ENCODE measurements at regions of chr18 and their contacts with region 1.

Region 1: DNA sequence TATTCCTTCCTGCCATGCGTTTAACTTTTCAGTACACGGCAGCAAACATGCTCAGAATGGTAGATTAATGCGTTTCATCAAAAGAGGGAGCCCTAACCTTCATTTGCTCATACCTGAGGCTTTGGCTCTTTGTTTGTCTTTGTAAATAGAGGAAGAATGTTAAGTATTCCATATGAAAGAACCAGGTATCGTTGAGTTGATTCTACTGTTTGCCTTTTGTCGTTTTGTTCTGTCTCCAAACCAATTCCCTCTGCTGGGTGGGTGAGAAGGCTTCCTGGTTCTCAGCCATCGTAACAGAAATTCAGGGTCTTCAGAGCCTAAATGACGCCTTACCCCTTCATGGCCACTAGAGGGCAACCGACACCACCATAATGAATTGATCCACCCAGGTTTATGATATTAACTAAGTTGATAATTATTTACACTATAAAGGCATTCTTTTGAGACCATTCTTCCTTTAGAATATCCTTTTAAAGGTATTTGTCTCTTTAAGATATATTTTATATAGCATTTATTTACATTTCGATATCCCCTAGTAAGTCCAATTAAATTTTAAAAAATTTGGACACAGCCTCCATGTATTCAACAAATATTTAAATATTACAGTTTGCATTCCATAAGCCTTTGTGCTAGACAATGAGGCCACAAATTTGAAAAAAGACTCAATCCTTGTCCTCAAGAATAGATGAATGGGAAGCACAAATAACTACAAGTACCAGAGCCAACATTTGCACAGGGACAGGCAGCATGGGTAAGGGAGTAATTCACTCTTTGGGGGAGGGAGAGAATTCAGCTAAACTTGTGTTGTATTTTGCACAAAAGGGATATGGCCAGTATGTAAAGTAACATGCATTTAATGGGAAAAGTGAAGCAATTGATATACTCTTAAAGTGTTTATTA is 48.1 kb downstream of the TIMM21 start:
- DNase-seq: no peak

Region 2: GRCh38 chr18:73891572-73892421 is 304.7 kb before region 1 on chr18:
- intact Hi-C with region 1: no loop called
- DNase-seq: no peak

Region 3: DNA sequence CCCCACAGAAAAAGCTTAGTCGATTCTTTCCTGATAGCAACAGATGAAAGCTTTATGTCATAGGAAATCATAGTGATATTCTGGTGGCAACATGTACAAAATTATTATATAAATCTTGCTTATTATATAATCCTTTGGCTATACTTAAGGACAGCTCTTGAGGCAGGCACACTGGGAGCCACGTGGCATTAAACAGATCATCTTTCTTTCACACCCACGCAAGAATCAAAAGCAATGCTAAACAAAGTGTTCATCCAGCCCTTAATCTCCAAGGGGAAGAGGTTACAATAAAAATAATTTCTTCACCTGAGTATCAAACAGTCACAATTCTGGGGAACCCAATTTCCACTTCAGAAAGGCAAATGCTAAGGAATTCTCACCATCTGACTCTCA is 37.5 kb after region 1 on chr18:
- intact Hi-C with region 1: loop called in 1 of 2 experiments (anchors 1 kb)
- DNase-seq: no peak

Region 4: DNA sequence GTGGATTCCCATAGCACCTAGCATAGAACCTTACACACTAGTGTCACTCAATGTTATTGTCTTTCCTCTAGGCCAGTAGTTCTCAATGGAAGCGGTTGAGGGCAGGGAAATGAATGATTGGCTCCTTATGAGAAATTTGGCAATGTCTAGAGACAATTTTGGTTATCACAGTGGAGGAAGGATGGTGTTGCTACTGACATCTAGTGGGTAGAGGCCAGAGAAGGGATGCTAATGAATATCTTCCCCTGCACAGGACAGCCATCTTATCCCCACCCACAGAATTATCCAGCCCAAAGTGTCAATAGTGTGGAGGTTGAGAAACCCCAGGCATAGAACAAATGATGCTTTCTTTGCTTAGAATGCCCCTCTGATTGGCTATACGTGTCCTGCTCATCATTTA is 134.9 kb after region 1 on chr18:
- intact Hi-C with region 1: loop called in 1 of 2 experiments (anchors 10 kb)
- DNase-seq: no peak

Region 5: GRCh38 chr18:74342416-74343043 is 146.1 kb after region 1 on chr18:
- intact Hi-C with region 1: loop called (anchors 5 to 10 kb)
- DNase-seq: no peak

Region 6: DNA sequence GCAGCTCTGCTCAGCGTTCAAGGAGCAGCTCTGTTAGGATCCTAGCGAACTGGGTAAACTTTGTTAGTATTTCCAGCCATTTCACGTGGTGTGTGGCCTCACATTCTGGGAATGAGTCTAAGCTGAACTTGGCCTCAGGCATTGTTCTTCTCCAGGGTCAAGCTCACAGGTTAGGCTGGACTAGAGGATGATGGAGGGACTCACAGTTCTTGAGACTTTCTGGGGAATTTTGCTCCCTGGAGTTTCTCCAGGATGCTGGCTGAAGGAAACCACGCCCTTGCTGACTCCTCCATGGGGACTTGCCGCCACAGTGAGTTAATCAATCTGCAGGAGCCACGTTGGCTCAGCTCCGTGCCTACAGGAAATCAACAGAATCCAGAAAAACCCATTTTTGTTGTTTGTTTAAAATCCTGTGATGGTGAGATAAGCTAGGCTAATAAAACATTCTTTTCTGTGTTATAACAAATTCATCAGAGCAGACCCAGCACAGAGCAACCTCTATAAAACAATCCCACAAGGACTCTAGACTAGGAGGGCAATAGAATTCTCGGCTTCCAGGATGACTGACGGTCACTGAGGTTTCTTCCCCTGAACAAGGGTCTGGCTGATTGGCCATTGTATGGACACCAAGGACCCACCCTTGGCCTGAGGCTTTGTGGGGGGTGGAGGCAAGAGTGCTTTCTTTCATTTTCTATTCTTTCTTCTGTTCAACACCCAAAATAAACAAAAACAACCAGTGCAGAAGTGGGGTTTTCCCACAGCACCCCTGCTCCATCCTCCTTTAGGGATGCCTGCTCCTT is 350.5 kb after region 1 on chr18:
- intact Hi-C with region 1: loop called (anchors 5 to 10 kb)
- DNase-seq: peak; percentile 76

Region 7: GRCh38 chr18:74551936-74552555 is 355.6 kb after region 1 on chr18:
- intact Hi-C with region 1: loop called (anchors 5 to 10 kb)
- DNase-seq: peak; percentile 91

Region 8: GRCh38 chr18:75322206-75322605 is 1125.7 kb after region 1 on chr18:
- intact Hi-C with region 1: no loop called
- DNase-seq: no peak